Mammary epithelial cell (primary cell): ENCODE measurements at regions of chr1 and their contacts with region 1.

Region 1: DNA sequence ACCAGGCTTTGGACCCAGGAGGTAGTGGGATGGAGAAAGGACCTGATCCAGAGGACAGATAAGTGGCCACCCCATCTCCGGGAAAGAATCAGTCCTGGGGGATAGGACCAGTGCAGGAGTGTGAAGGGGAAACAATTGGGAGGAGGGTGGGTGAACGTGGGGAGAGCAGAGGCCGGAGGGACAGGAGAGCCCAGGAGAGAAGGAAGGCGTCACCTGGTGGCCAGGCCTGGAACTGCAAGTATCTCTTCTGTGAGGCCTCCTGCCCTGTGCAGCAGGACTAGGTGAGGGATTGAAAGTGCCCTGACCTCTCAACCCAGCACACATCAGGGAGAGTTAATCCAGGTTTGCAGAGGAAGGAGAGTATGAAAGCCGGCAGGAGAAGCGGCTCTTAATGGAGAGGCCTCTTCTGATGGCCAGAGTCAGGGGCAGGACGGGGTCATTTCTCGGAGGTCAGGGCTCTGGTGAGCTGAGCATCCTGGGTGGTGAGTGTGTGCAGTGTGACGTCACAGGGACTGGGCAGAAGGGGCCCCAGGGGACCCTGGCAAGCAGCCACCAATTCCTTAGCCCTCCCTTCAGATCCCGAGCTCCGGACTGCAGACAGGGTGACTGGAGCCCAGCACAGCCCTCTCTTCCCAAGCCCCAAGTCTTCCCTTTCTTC is 9.2 kb upstream of the LAD1 start:
- DNase-seq: peak; percentile 63
- H3K4me3 ChIP-seq: no peak overlapping the region
- H3K27ac ChIP-seq: no peak overlapping the region
- H3K4me1 ChIP-seq: no peaks in the 10 kb centered on the region
- H3K27me3 ChIP-seq: no peaks in the 10 kb centered on the region
- CTCF ChIP-seq: peak; percentile 96 to 98

Region 2: DNA sequence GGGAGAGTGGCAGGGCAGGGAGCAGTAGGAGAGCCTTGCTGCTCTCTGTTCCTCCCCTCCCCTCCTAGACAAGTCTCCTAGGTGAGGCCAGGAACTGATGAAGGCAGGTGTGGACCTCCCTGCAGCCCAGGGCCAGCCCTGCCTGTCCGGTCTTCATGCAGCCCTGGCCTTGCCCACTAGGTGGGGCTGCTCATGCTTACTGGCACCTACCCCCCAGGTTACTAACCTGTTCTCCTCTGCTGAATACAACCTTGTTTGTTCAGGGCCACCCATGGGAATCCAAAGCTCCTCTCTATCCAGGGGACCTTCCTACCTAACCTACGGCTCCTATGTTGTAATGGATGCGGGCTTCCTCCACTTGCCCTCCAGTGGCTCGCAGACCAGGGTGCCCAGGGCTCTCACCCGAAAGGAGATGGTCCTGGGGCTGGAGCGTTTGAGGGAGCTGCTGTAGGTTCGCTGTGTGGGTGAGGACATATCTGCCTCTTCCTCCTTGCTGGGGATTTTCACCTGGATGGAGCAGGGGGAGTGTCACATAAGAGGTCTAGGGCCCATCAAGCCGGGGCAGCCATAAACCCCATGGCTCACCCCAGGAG is 22.9 kb before region 1 on chr1:
- CTCF ChIA-PET with region 1: no interaction called
- dilution Hi-C with region 1: no loop called
- in situ Hi-C with region 1: no loop called
- intact Hi-C with region 1: loop called (anchors 1 kb)
- DNase-seq: peak; percentile 54
- H3K4me3 ChIP-seq: no peak overlapping the region
- H3K27ac ChIP-seq: no peak overlapping the region
- H3K4me1 ChIP-seq: no peaks in the 10 kb centered on the region
- H3K27me3 ChIP-seq: no peaks in the 10 kb centered on the region
- CTCF ChIP-seq: peak; percentile 90 to 95